Activated CD4-positive, alpha-beta T cell treated with anti-CD3 and anti-CD28 coated beads for 36 hours (primary cell): ENCODE measurements at regions of chr20 and their contacts with region 1.

Region 1: GRCh38 chr20:43955062-43955749 is 40.6 kb downstream of the TOX2 start:
- DNase-seq: peak; percentile 72
- ATAC-seq: peak; percentile 93
- H3K4me3 Mint-ChIP-seq: peak overlapping the region; percentile 8
- H3K27ac Mint-ChIP-seq: peak overlapping the region; percentile 71
- H3K4me1 Mint-ChIP-seq: peaks cover 76% of the 10 kb centered on the region
- H3K27me3 Mint-ChIP-seq: peaks cover 35% of the 10 kb centered on the region

Region 2: GRCh38 chr20:43824309-43825050 is 130.7 kb before region 1 on chr20:
- CTCF ChIA-PET with region 1: no interaction called
- POLR2A ChIA-PET with region 1: no interaction called
- intact Hi-C with region 1: loop called in 1 of 2 experiments (anchors 1 kb)
- DNase-seq: no peak
- ATAC-seq: no peak
- H3K4me3 Mint-ChIP-seq: no peak overlapping the region
- H3K27ac Mint-ChIP-seq: no peak overlapping the region
- H3K4me1 Mint-ChIP-seq: peaks cover 12% of the 10 kb centered on the region
- H3K27me3 Mint-ChIP-seq: peaks cover 1% of the 10 kb centered on the region

Region 3: DNA sequence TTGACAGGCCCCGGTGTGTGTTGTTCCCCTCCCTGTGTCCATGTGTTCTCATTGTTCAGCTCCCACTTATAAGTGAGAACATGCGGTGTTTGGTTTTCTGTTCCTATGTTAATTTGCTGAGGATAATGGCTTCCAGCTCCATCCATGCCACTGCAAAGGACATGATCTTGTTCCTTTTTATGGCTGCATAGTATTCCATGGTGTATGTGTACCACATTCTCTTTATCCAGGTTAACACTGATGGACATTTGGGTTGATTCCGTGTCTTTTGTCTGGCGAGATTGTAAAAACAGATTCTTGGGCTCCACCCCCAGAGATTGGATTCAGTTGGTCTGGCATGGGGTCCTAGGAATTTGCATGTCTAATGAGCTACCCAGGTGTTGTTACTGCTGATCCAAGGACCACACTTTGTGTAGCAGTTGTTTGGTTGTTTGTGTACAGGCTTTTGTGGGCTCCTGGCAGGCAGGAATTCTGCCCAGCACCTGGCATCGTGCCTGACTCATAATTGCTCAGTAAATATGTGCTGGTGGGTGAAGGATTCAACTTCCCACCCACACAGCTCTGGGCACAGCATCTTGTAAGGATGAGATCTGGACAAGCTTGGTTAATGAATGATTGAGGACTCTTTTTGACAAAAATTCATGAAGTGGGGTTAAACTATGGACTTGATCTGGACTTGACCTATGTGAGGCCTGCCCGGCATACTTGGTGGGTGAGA is 35.4 kb before region 1 on chr20:
- CTCF ChIA-PET with region 1: no interaction called
- POLR2A ChIA-PET with region 1: no interaction called
- intact Hi-C with region 1: loop called (anchors 1 to 5 kb)
- DNase-seq: no peak
- ATAC-seq: no peak
- H3K4me3 Mint-ChIP-seq: no peak overlapping the region
- H3K27ac Mint-ChIP-seq: no peak overlapping the region
- H3K4me1 Mint-ChIP-seq: peaks cover 49% of the 10 kb centered on the region
- H3K27me3 Mint-ChIP-seq: peaks cover 46% of the 10 kb centered on the region

Region 4: DNA sequence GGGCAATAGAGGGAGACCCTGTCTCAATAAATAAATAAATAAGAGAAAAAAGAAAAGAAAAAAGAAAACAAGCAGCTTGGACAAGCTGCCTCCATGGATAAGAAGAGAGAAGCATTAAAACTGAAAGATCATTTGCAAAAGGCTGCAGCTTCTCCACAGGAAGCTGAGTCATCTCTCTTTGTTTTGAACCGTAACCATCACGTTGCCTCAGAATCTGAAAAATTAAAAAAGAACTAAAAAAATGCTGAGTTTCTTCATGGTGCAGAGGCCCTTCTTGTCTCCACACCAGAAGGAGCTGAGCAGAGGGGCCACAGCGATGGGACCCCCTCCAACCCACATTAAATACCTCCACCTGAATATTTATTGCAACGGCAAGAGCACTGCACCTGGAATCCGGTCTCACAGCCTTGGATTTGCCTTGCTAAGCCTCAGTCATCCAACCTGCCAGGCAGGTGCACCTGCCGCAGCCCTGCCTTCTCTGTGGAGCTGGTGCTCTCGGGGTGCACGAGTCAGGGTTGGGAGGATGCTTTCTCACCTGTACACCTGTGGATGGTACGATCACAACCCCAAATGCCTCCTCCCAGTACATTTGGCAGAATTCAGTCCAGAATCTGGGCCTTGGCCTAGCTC is 12.4 kb before region 1 on chr20:
- CTCF ChIA-PET with region 1: interaction called, 16 read pairs
- POLR2A ChIA-PET with region 1: interaction called, 7 read pairs
- intact Hi-C with region 1: loop called in 1 of 2 experiments (anchors 1 kb)
- DNase-seq: peak; percentile 33
- ATAC-seq: peak; percentile 70
- H3K4me3 Mint-ChIP-seq: no peak overlapping the region
- H3K27ac Mint-ChIP-seq: peak overlapping the region; percentile 56
- H3K4me1 Mint-ChIP-seq: peaks cover 69% of the 10 kb centered on the region
- H3K27me3 Mint-ChIP-seq: peaks cover 11% of the 10 kb centered on the region

Region 5: GRCh38 chr20:43988867-43989266 is 33.7 kb after region 1 on chr20:
- CTCF ChIA-PET with region 1: interaction called, 6 read pairs
- POLR2A ChIA-PET with region 1: no interaction called
- intact Hi-C with region 1: loop called (anchors 1 to 2 kb)
- DNase-seq: no peak
- ATAC-seq: peak; percentile 20
- H3K4me3 Mint-ChIP-seq: no peak overlapping the region
- H3K27ac Mint-ChIP-seq: peak overlapping the region; percentile 55
- H3K4me1 Mint-ChIP-seq: peaks cover 24% of the 10 kb centered on the region
- H3K27me3 Mint-ChIP-seq: no peaks in the 10 kb centered on the region

Region 6: GRCh38 chr20:44176833-44177534 is 221.8 kb after region 1 on chr20:
- CTCF ChIA-PET with region 1: no interaction called
- POLR2A ChIA-PET with region 1: no interaction called
- intact Hi-C with region 1: no loop called
- DNase-seq: no peak
- ATAC-seq: no peak
- H3K4me3 Mint-ChIP-seq: no peak overlapping the region
- H3K27ac Mint-ChIP-seq: no peak overlapping the region
- H3K4me1 Mint-ChIP-seq: no peaks in the 10 kb centered on the region
- H3K27me3 Mint-ChIP-seq: peaks cover 14% of the 10 kb centered on the region

Region 7: DNA sequence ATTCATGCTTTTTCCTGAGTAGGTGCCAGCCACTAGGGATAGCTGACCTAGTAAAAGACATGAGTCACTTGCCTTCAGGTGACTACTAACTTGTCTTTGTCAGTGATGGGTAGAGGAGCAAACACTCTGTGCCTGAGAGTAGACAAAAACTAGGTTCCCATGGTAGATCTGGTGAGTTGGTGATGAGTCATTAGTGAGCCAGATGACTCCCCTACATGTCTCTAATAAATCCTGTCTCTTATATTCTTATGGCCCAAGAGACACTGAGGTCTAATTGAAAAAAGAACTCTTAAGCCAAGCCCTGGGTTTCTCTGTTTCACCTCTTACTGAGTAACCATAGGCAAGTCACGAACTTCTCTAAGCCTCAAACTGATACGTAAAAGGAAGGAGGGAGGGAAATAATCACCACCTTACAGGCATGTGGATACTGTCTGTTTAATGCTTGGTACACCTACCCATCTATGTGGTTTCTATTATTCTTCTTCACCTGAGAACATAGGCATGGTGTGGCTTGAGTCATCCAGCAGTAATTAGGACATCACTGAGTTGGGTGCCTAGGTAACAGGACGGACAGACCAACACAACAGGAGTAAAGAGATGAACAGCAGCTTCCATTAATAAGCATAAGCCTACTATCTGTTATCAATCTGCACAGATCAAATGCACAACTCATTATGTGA is 540.7 kb after region 1 on chr20:
- CTCF ChIA-PET with region 1: no interaction called
- POLR2A ChIA-PET with region 1: no interaction called
- intact Hi-C with region 1: loop called in 1 of 2 experiments (anchors 10 kb)
- DNase-seq: peak; percentile 27
- ATAC-seq: peak; percentile 84
- H3K4me3 Mint-ChIP-seq: no peak overlapping the region
- H3K27ac Mint-ChIP-seq: peak overlapping the region; percentile 78
- H3K4me1 Mint-ChIP-seq: peaks cover 50% of the 10 kb centered on the region
- H3K27me3 Mint-ChIP-seq: no peaks in the 10 kb centered on the region